HEK293 (cell line): ENCODE measurements at regions of chr10 and their contacts with region 1.

Region 1: DNA sequence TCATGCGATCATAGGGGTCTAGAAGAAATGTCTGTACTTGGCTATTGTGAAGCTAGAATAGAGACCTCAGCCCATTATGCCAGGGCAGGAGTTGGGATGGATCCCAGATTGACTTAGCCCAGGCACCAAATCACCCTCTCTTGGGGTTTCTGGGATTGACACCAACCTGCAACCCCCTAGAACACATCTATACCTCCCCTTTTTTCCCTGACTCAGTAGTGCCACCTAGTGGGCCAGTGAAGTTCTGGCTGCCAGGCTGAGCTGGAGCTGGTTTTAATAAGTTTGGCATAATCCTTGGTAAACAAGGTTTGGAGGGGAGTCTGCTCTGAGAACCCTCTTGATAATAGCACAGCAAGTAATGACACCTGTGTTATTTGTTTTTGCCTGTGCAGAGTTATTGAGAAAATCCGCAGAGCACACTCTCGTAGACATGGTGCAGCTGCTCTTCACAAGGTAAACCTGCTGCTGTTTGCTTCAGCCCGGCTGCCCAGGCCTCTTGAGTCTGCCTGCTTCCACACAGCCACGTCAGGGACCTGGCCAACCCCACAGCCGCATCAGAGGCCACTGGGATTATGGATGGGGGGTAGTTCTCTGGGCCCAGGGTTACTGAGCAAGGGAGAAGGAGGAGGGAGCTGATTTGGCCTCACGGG is 43.3 kb upstream of the NFKB2 start:
- H3K4me3 ChIP-seq: no peak overlapping the region
- H3K27ac ChIP-seq: no peak overlapping the region
- H3K4me1 ChIP-seq: no peaks in the 10 kb centered on the region
- CTCF ChIP-seq: peak; percentile 61; the same call in 1 of the 2 replicates

Region 2: GRCh38 chr10:102167861-102168260 is 184.3 kb before region 1 on chr10:
- CTCF ChIA-PET with region 1: interaction called, 40 read pairs
- POLR2A ChIA-PET with region 1: no interaction called
- H3K4me3 ChIP-seq: no peak overlapping the region
- H3K27ac ChIP-seq: no peak overlapping the region
- H3K4me1 ChIP-seq: no peaks in the 10 kb centered on the region
- CTCF ChIP-seq: no peak

Region 3: DNA sequence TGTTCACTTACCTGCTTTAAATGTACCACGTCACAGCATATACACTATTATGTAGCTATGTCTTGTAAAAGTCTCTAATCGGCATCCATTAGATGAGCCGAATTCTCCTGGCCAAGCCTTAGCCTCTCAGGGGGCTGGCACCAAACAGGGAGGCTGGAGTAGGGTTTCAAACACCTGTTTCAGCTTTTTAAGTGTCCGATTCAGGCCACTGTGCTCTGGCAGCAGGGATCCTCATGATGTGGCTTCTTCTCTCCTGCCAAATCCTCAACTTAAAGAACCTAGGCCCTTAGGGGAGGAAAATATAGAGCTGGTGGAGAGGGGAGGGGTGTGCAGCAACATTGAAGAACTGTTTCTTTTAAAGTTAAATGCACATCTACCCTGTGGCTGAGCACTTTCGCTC is 25.2 kb before region 1 on chr10:
- CTCF ChIA-PET with region 1: interaction called, 11 read pairs
- POLR2A ChIA-PET with region 1: no interaction called
- H3K4me3 ChIP-seq: no peak overlapping the region
- H3K27ac ChIP-seq: no peak overlapping the region
- H3K4me1 ChIP-seq: peaks cover 8% of the 10 kb centered on the region; the same call in 1 of the 2 replicates
- CTCF ChIP-seq: no peak

Region 4: DNA sequence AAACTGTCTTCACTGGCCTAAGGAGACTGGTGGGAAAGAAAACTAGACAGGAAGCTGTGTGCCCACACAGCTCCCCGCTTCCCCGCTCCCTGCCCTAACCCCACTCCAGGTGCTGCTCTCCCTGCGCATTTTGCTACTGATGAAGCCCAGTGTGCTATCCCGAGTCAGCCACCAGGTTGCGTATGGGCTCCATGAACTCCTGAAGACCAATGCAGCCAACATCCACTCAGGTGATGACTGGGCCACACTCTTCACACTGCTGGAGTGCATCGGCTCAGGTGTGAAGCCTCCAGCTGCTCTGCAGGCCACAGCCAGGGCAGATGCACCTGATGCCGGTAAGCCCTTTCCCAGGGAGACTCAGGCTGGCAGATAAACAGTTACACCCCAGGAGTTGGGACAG is 23.1 kb after region 1 on chr10:
- CTCF ChIA-PET with region 1: interaction called, 17 read pairs
- POLR2A ChIA-PET with region 1: no interaction called
- H3K4me3 ChIP-seq: no peak overlapping the region
- H3K27ac ChIP-seq: no peak overlapping the region
- H3K4me1 ChIP-seq: no peaks in the 10 kb centered on the region
- CTCF ChIP-seq: 0 out of 2 replicates have a peak, but pooled peaks have one; percentile 21

Region 5: DNA sequence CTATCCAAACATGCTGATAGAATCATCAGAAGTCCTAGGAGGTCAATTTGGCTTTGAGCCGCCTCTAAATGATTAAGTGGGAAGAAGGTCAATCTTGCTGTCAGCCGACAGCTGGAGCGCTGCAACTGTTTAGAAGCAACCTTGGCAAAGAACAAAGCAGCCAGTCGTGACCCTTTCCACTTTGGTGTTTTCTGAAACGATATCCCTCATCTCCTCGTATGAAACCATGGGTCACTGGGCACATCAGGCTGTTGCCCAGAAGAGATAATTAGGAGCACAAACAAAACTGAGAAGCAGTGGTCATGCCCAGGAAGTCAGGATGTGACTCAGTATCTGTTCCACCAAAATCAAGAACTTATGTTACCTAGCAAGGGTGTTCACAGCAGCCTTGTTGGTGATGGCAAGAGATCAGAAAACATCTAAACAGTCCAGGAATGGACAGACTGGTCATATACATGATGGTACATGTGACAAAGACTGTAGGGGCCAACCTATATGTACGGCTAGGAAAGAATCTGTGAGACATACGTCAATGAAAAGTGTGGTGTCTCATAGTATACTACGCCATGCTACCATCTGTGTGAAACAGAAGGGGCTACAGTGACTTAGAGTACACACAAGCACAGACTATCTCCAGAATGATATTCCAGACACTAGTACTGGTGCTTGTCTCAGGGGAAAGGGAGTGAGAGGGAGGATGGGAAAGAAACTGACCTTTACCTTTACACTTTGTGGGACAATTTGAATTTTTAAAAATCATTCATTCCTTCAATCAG is 1543.4 kb after region 1 on chr10:
- CTCF ChIA-PET with region 1: no interaction called
- POLR2A ChIA-PET with region 1: no interaction called
- H3K4me3 ChIP-seq: no peak overlapping the region
- H3K27ac ChIP-seq: peak overlapping the region; percentile 7; the same call in 1 of the 2 replicates
- H3K4me1 ChIP-seq: peaks cover 23% of the 10 kb centered on the region
- CTCF ChIP-seq: no peak